Left cardiac atrium (tissue), 4 donors: ENCODE measurements at regions of chr17 and their contacts with region 1.

Region 1: DNA sequence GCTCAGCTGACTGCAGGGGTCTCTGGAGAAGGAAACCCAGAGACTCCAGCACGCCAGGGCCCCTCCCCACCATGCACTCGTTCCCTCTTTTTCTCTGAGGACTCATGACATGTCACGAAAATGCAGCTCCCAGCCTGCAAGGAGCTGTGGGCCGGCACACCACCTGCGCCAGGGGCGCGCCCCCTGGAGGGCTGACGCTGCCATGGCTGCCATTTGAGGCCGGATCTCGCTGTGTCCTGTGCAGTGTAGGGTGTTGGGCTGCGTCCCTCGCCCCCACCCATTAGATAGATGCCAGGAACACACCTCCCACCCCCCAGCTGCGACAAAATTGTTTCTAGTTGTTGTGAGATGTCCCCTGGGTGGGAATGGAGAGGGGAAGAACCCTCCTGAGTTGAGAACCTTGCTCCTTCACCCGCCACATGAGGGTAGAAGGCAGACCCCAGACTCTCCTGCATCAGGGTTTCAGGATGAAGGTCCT is 8.2 kb downstream of the SYNGR2 start:
- DNase-seq: peak; percentile 77
- ATAC-seq: peak; percentile 42 to 43

Region 2: DNA sequence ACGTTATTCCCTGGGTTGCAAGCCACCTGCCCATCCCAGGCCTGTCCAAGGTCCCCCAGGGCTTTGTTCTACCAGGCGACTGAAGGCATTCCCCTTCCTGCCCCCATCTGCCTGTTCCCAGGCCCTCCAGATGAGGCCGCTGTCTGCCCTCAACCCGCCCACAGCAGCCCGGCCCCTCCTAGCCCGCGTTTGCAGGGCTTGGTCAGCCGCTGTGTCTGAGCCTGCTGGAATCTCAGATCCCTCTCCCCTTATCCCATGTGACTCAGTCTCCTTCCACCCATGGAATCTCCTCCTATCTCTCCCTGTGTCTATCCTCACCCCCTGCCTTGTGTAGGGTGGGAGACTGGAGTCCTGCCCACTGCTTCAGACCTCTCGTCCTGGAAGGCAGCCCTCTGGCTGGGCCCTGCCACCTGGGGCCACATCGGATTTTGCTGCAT is 404.1 kb before region 1 on chr17:
- intact Hi-C with region 1: no loop called
- DNase-seq: peak; percentile 69
- ATAC-seq: peak; percentile 88 to 93

Region 3: GRCh38 chr17:78101112-78101511 is 75.5 kb before region 1 on chr17:
- intact Hi-C with region 1: no loop called
- DNase-seq: no peak
- ATAC-seq: no peak

Region 4: GRCh38 chr17:78112518-78113226 is 63.9 kb before region 1 on chr17:
- intact Hi-C with region 1: loop called (anchors 1 to 5 kb)
- DNase-seq: peak; percentile 81
- ATAC-seq: peak; percentile 73 to 78

Region 5: DNA sequence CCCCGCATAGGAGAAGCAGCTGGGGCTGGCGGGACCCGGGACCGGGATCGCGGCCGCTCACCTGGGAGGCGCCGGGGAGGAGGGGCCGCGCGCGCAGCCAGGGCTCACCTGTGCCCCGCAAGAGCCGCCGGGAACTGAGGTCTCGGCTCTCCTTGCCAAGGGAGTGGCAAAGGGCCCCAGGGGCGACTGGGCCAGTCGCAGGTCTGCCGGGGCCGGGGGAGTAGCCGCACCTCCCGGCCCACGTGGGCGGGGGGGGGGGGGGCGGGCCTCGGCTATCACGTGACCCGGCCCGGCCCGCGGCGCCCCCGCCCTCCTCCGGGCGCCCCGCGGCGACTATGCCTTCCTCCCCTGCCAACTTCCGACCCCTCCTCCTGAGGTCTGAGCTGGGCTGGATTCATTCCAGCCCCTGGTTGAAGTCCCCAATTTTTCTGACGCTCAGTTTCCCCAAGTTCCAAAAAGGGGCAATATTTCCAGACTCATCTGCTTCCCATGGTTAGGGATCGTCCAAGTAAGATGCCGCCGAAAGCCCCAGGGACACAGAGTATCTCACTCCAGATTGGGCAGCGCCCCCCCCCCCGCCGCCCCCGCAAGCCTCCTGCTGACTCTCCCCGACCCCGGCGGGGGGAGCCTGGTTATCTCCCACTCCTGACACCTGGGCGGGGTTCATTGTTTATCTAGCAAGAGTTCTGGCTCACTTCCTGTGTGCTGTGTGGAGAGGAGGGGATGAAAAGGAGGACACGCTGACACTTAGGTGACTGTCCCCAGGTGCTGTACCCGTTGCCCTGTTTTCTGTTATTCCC is 47.8 kb before region 1 on chr17 and contains the start of gene TMC6:
- intact Hi-C with region 1: loop called (anchors 5 kb)
- DNase-seq: peak; percentile 61
- ATAC-seq: peak; percentile 41
- total RNA-seq, gene TMC6: 24.9 to 32.0 TPM

Region 6: GRCh38 chr17:78133971-78134898 is 42.4 kb before region 1 on chr17:
- intact Hi-C with region 1: loop called (anchors 5 kb)
- DNase-seq: peak; percentile 58
- ATAC-seq: no peak